K562 (cell line): ENCODE measurements at regions of chr11 and their contacts with region 1.

Region 1: GRCh38 chr11:21511835-21512440 is 680.9 kb upstream of the ANO5 start:
- DNase-seq: peak; percentile 28 to 44 (median 29)
- ATAC-seq: peak; percentile 46; the same call in 1 of the 3 replicates
- H3K4me3 ChIP-seq: no peak overlapping the region
- H3K27ac ChIP-seq: no peak overlapping the region
- H3K4me1 ChIP-seq: no peaks in the 10 kb centered on the region
- H3K27me3 ChIP-seq: no peaks in the 10 kb centered on the region
- CTCF ChIP-seq: peak; percentile 26 to 44 (median 43); a peak in 4 of 6 replicates
- EP300 ChIP-seq: no peak
- POLR2A ChIP-seq: no peak
- RAD21 ChIP-seq: peak in 1 of 2 experiments; percentile 42; a peak in 3 of 4 replicates

Region 2: GRCh38 chr11:20658135-20658534 is 853.8 kb before region 1 on chr11:
- CTCF ChIA-PET with region 1: no interaction called
- POLR2A ChIA-PET with region 1: no interaction called
- in situ Hi-C with region 1: loop called (anchors 10 kb)
- intact Hi-C with region 1: no loop called
- DNase-seq: no peak
- ATAC-seq: no peak
- H3K4me3 ChIP-seq: no peak overlapping the region
- H3K27ac ChIP-seq: no peak overlapping the region
- H3K4me1 ChIP-seq: no peaks in the 10 kb centered on the region
- H3K27me3 ChIP-seq: peaks cover 0 to 6% of the 10 kb centered on the region in 2 experiments; a peak in 2 of 5 replicates
- CTCF ChIP-seq: no peak
- EP300 ChIP-seq: no peak
- POLR2A ChIP-seq: no peak
- RAD21 ChIP-seq: no peak

Region 3: DNA sequence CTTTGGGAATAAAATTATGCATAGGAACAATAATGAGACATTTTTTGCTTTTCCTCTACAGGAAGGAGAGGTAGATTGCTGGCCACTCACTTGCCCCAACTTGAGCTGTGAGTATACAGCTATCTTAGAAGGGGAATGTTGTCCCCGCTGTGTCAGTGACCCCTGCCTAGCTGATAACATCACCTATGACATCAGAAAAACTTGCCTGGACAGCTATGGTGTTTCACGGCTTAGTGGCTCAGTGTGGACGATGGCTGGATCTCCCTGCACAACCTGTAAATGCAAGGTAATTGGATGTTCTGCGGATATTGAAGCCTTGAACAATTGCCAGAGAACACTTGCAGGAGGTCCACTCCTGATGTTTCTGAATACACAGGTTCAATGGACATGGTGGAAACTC is 61.2 kb after region 1 on chr11:
- CTCF ChIA-PET with region 1: no interaction called
- POLR2A ChIA-PET with region 1: no interaction called
- in situ Hi-C with region 1: no loop called
- intact Hi-C with region 1: no loop called
- DNase-seq: no peak
- ATAC-seq: no peak
- H3K4me3 ChIP-seq: no peak overlapping the region
- H3K27ac ChIP-seq: no peak overlapping the region
- H3K4me1 ChIP-seq: no peaks in the 10 kb centered on the region
- H3K27me3 ChIP-seq: no peaks in the 10 kb centered on the region
- CTCF ChIP-seq: no peak
- EP300 ChIP-seq: no peak
- POLR2A ChIP-seq: no peak
- RAD21 ChIP-seq: no peak